ENCODE measurements at regions of chr4 and their contacts with region 1.

Region 1: GRCh38 chr4:21802406-21802805 is 146.2 kb downstream of the KCNIP4 start:
- DNase-seq: peak; percentile 29
- H3K4me3 Mint-ChIP-seq: no peak overlapping the region
- H3K27ac Mint-ChIP-seq: peak overlapping the region; percentile 73
- H3K4me1 Mint-ChIP-seq: peaks cover 23% of the 10 kb centered on the region
- H3K27me3 Mint-ChIP-seq: no peaks in the 10 kb centered on the region
- CTCF ChIP-seq: no peak

Region 2: GRCh38 chr4:21749924-21750323 is 52.5 kb before region 1 on chr4:
- CTCF ChIA-PET with region 1: no interaction called
- POLR2A ChIA-PET with region 1: no interaction called
- intact Hi-C with region 1: no loop called
- DNase-seq: peak; percentile 36
- H3K4me3 Mint-ChIP-seq: no peak overlapping the region
- H3K27ac Mint-ChIP-seq: no peak overlapping the region
- H3K4me1 Mint-ChIP-seq: peaks cover 7% of the 10 kb centered on the region
- H3K27me3 Mint-ChIP-seq: peaks cover 8% of the 10 kb centered on the region
- CTCF ChIP-seq: no peak

Region 3: DNA sequence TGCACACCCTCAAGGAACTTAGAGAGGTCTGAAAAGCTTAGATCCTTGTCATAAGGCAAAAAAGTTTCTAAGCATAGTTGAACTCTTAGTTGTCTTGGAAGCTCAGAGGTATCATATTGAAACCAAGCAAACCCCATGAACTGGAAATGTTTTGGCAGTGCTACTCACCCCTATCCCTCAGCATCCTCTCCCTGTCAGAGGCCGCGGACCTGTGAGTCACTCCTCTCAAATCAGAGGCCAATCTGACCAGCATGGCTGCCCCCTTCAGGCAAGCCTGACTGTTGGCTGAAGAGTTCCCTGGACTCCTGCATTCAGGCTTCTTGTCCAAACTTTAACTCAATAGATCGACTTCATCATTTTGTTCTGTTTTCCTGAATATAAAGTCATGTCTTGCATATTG is 76.8 kb after region 1 on chr4:
- CTCF ChIA-PET with region 1: no interaction called
- POLR2A ChIA-PET with region 1: no interaction called
- intact Hi-C with region 1: loop called (anchors 5 kb)
- DNase-seq: peak; percentile 60
- H3K4me3 Mint-ChIP-seq: no peak overlapping the region
- H3K27ac Mint-ChIP-seq: no peak overlapping the region
- H3K4me1 Mint-ChIP-seq: no peaks in the 10 kb centered on the region
- H3K27me3 Mint-ChIP-seq: no peaks in the 10 kb centered on the region
- CTCF ChIP-seq: no peak

Region 4: DNA sequence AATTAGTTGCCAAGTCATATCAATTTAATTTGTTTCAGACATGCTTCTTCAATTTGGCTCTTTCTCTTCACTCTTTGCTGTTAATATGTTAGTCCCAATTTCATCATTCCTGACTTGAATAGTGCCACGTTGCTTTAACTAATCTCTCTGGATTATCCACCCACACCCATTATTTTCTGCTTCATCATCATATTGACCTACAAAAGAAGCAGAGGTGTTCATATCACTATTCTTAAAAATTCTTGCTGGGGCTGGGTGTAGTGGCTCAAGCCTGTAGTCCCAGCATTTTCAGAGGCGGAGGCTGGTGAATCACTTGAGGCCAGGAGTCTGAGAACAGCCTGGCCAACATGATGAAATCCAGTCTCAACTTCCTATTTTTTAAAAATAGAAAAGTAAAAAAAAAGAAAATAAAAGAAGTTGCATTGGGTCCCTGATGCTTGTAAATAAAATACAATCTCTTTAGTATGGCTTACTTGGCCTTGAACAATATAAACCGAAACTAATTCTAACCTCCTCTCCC is 211.9 kb after region 1 on chr4:
- CTCF ChIA-PET with region 1: no interaction called
- POLR2A ChIA-PET with region 1: no interaction called
- intact Hi-C with region 1: loop called (anchors 10 kb)
- DNase-seq: peak; percentile 24
- H3K4me3 Mint-ChIP-seq: no peak overlapping the region
- H3K27ac Mint-ChIP-seq: peak overlapping the region; percentile 24
- H3K4me1 Mint-ChIP-seq: peaks cover 7% of the 10 kb centered on the region
- H3K27me3 Mint-ChIP-seq: no peaks in the 10 kb centered on the region
- CTCF ChIP-seq: no peak

Measured in MCF 10A (cell line).